GM10248 (cell line): ENCODE measurements at regions of chr13 and their contacts with region 1.

Region 1: GRCh38 chr13:44484562-44485138 is 91.5 kb downstream of the TSC22D1 start:
- DNase-seq: no peak
- CTCF ChIP-seq: no peak

Region 2: DNA sequence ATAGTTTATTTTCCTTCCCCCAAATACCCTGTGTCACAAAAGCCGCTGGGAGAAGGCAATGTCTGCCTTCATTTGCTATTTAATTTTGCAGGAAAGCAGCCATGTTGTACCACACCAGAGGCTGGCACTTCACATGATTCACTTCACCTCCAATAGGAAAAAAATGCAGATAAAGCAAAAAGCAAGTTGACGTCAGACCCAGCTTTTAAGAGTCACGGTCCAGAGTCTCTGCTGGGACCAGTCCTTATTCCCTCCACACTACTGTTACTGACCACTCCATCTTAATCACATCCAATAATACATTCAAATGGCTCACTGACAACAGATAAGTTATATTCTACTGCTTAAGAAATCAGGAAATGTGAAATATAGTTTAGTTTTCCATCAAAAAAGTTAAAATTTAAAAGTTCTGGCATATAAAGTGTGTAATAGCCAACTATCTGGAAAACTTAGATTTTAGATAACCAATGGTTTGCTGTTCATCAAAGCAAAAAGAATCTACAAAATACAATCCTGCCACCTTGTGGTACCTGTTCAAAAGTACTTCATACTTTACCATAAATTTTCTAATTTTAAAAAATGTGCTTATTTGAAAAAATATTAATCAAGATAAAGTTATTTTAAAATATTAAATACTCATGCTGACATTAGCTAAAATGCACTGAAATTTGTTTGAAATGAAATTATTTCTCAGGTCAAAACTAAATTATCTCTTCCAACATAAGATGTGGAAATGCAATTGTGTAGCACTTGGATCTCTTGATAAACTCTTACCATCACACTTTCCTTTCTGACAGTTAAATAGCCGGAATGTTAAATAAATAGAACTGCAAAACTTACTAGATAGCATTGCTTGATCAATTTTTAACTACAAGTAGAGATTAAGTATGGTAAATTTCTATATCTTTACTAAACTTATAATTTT is 13.8 kb before region 1 on chr13:
- CTCF ChIA-PET with region 1: interaction called, 12 read pairs
- POLR2A ChIA-PET with region 1: no interaction called
- DNase-seq: no peak
- CTCF ChIP-seq: peak; percentile 31

Region 3: GRCh38 chr13:44508562-44509077 is 24.0 kb after region 1 on chr13:
- CTCF ChIA-PET with region 1: interaction called, 16 read pairs
- POLR2A ChIA-PET with region 1: no interaction called
- DNase-seq: no peak
- CTCF ChIP-seq: no peak

Region 4: GRCh38 chr13:44879463-44880058 is 394.9 kb after region 1 on chr13:
- CTCF ChIA-PET with region 1: interaction called, 25 read pairs
- POLR2A ChIA-PET with region 1: no interaction called
- DNase-seq: peak; percentile 41
- CTCF ChIP-seq: peak; percentile 53

Region 5: DNA sequence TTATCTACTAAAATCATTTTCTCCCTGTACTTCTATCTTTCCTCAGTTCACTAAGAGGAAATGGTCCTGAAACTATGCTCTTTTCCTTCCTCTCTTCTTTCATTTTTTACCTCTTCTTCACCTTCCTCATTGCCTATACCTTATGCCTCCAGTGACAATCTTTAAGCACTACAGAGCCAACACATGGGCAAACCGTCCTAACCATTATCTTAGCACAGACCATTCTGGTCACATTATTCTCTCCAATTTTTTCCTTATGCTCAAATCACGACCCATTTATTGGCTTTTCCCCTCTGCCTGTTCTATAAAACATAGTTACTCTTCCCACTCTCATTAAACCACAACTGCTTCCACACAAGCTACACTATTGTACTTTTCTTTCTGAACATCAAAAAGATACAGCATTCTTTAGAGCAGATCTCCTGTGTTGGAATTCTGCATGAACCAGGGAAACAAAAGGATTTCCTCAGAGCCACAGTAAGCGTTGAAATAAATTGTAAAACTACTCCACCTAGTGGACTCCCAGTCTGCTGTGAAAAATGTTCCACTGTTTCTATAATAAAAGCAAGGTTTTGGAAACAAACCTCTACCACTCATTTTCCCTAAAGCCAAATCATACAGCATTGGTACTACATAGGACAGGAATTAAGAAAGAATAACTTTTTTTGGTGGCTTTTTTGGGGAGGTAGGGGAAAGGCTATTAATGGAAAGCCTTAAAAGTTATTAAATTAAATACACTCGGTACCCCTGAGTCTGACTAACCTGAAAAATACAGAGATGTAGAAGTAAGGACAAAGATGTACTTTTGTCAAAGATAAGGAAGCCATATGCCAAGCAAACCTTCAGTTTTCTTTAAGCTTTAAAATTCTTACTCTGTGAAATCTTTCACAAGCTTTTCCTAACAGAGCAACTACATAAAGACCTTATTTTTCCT is 485.2 kb after region 1 on chr13:
- CTCF ChIA-PET with region 1: interaction called, 27 read pairs
- POLR2A ChIA-PET with region 1: no interaction called
- DNase-seq: no peak
- CTCF ChIP-seq: peak; percentile 56